ENCODE measurements at regions of chr4 and their contacts with region 1.

Region 1: DNA sequence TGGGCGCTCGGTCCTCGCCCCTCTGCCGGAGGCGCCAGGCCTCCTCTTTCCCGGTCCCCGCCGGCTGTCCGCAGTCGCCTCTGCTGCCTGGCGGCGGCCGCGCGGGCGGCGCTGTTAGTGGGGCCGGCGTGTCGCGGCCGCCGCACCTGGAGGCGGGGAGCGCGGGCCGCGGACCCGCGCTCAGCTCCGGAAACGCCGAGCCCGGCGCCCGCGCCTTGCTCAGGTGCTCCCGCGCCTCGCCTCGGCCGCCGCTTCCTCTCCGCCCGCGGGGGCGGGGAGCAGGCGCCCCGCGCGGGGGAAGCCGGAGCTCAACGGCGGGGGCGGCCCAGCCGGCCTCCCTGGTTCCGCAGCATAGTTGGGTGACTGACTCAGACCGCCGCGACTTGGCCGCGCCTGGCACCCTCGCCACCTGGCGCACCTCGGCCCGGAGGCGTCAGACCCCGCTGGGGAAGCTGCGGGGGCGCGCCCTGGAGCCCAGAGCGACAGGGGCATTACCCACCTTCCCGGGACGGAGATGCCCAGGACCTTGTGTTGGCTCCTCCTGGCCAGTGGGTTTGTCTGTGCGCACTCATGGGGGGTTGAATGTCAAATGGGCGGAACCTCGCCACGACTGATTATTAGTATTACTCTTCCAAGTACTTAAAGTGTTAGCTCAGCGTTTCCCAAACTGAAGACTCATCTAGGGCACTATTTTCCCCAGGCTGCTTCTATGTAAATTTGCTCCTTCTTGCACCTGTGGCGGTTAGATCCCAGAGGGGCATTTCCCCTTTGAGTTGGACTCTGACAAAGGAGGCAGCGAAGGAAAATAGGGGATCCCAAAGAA is at the start of gene ARAP2:
- DNase-seq: peak; percentile 86
- H3K4me3 Mint-ChIP-seq: peak within 1 kb of the TSS; percentile 97
- H3K27ac Mint-ChIP-seq: peak within 1 kb of the TSS; percentile 94
- H3K4me1 Mint-ChIP-seq: peaks cover 42% of the 10 kb centered on the region
- H3K27me3 Mint-ChIP-seq: no peaks in the 10 kb centered on the region
- total RNA-seq, gene ARAP2: 49.3 to 57.7 TPM

Region 2: DNA sequence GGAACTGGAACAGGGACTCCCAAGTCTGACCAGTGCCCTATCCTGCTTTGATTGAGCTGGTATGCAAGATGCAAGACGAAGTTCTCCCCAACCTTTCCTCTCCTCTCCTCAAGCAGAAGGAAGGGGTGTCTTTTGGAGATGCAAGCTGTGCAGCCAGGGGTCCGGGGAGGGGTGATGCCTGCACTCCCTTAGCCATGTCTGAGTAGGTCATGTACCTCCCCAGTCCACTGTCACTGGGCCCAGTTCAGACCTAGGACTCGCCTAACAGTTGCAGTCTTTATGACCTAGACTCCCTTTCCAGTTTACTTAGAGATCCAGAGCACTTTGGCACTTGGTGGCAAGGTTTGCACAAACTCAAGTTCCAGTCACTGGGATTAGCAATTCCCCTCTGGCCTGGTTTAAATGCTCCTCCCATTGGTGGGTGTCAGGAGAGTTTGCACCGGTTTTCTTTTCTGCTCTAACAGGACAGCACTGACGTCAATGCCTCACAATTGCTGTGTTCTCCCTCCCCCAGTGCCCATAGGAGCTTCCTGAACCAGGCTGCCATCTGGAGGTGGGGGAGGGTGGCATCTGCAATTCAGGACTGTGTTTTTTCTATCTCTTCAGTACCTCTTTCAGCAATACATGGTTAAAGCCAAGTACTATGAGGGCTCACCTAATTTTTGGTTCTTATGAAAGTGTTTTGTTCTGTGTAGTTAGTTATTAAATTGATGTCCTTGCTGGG is 782.4 kb before region 1 on chr4:
- CTCF ChIA-PET with region 1: no interaction called
- POLR2A ChIA-PET with region 1: no interaction called
- intact Hi-C with region 1: no loop called
- DNase-seq: no peak
- H3K4me3 Mint-ChIP-seq: no peak overlapping the region
- H3K27ac Mint-ChIP-seq: no peak overlapping the region
- H3K4me1 Mint-ChIP-seq: no peaks in the 10 kb centered on the region
- H3K27me3 Mint-ChIP-seq: no peaks in the 10 kb centered on the region

Region 3: DNA sequence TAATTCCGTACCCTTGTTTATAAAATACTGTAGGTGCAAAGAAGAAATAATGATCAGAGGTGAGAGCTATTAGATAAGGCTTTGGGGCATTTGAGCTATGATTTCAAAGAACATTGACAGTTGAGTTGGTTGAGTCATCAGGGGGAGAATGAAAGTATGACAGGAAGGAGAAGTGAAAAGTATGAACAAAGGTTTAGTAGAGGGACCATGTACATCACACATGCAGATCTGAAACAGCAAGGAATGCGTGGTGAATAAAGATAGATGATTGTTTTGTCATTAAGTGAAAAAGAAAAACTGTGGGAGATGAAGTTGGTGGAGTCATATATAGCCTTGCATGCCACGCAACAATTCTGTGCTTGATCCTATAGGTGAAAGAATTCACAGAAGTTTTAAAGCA is 163.3 kb before region 1 on chr4:
- CTCF ChIA-PET with region 1: no interaction called
- POLR2A ChIA-PET with region 1: no interaction called
- intact Hi-C with region 1: loop called (anchors 1 kb)
- DNase-seq: peak; percentile 37
- H3K4me3 Mint-ChIP-seq: no peak overlapping the region
- H3K27ac Mint-ChIP-seq: no peak overlapping the region
- H3K4me1 Mint-ChIP-seq: peaks cover 7% of the 10 kb centered on the region
- H3K27me3 Mint-ChIP-seq: no peaks in the 10 kb centered on the region

Region 4: GRCh38 chr4:36233567-36234266 is 10.8 kb before region 1 on chr4:
- CTCF ChIA-PET with region 1: interaction called, 3 read pairs
- POLR2A ChIA-PET with region 1: interaction called, 4 read pairs
- intact Hi-C with region 1: loop called (anchors 1 kb)
- DNase-seq: no peak
- H3K4me3 Mint-ChIP-seq: no peak overlapping the region
- H3K27ac Mint-ChIP-seq: no peak overlapping the region
- H3K4me1 Mint-ChIP-seq: peaks cover 85% of the 10 kb centered on the region
- H3K27me3 Mint-ChIP-seq: no peaks in the 10 kb centered on the region

Region 5: DNA sequence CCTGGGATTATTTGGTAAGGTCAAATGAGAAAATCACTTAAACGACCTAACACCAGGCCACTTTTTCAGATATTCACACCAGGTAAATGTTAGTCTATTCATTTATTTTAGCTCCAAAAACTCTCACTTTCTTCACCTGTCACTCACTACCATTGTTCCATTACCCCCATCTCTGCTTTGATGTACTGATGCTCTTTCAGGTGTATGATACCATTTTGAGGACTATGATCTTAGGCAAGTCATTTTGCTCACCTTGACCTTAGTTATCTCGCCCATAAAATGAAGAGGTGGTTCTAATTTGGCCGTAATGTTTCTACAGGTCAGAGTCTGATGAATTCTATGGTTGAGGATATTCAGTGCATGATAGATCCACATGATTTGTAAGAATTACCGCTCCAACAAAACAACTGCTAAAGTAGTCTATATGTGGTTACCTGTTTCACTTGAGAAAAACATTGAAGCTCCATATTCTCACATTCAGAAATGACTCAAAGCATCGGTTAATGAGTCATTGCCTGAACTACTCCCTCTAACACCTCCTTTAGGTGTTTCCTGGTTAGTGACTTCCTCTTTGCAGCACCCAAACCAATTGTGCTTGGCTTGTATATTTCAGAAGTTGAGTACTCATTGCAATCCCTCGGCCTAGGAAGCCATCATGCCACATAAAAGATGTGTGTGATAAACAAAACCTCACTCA is 41.5 kb after region 1 on chr4:
- CTCF ChIA-PET with region 1: interaction called, 6 read pairs
- POLR2A ChIA-PET with region 1: interaction called, 29 read pairs
- intact Hi-C with region 1: loop called (anchors 1 kb)
- DNase-seq: peak; percentile 75
- H3K4me3 Mint-ChIP-seq: peak overlapping the region; percentile 53
- H3K27ac Mint-ChIP-seq: peak overlapping the region; percentile 87
- H3K4me1 Mint-ChIP-seq: peaks cover 60% of the 10 kb centered on the region
- H3K27me3 Mint-ChIP-seq: no peaks in the 10 kb centered on the region

Region 6: DNA sequence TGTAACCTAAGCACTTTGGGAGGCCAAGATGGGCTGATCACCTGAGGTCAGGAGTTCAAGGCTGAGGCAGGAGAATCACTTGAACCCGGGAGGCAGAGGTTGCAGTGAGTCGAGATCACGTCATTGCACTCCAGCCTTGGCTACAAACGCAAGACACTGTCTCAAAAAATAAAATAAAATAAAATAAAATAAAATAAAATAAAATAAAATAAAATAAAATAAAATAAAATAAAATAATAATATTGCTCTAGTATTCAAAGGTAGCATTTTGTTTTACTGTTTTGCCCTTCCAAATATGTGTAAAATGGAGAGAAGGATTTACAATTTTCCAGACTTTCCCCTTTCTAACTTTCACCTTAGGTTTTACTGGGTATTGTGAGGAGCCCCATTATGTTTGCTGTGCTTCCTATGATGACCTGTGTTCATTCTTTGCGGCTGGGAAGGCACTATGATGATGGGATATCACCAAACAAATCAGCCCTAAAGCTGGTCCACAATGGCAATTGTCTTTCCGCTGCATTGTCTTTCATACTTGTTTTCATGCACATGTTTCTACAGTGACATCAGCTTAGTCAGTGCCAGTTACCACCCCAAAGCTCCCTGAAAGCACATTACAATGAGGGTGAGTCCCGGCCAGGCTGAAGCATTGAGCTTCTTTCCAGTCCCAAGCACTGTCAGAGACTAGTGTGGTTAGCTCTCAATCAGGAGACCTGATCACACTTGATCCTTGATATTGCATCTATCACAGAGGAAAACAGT is 87.7 kb after region 1 on chr4:
- CTCF ChIA-PET with region 1: interaction called, 4 read pairs
- POLR2A ChIA-PET with region 1: interaction called, 14 read pairs
- intact Hi-C with region 1: no loop called
- DNase-seq: peak; percentile 57
- H3K4me3 Mint-ChIP-seq: no peak overlapping the region
- H3K27ac Mint-ChIP-seq: peak overlapping the region; percentile 78
- H3K4me1 Mint-ChIP-seq: peaks cover 23% of the 10 kb centered on the region
- H3K27me3 Mint-ChIP-seq: no peaks in the 10 kb centered on the region

Region 7: GRCh38 chr4:36399762-36400353 is 155.4 kb after region 1 on chr4:
- CTCF ChIA-PET with region 1: interaction called, 15 read pairs
- POLR2A ChIA-PET with region 1: interaction called, 5 read pairs
- intact Hi-C with region 1: no loop called
- DNase-seq: peak; percentile 61
- H3K4me3 Mint-ChIP-seq: no peak overlapping the region
- H3K27ac Mint-ChIP-seq: no peak overlapping the region
- H3K4me1 Mint-ChIP-seq: peaks cover 17% of the 10 kb centered on the region
- H3K27me3 Mint-ChIP-seq: no peaks in the 10 kb centered on the region

Region 8: GRCh38 chr4:36761607-36762006 is 517.1 kb after region 1 on chr4:
- CTCF ChIA-PET with region 1: no interaction called
- POLR2A ChIA-PET with region 1: no interaction called
- intact Hi-C with region 1: no loop called
- DNase-seq: no peak
- H3K4me3 Mint-ChIP-seq: no peak overlapping the region
- H3K27ac Mint-ChIP-seq: no peak overlapping the region
- H3K4me1 Mint-ChIP-seq: no peaks in the 10 kb centered on the region
- H3K27me3 Mint-ChIP-seq: no peaks in the 10 kb centered on the region